OCI-LY7 (cell line): ENCODE measurements at regions of chr17 and their contacts with region 1.

Region 1: DNA sequence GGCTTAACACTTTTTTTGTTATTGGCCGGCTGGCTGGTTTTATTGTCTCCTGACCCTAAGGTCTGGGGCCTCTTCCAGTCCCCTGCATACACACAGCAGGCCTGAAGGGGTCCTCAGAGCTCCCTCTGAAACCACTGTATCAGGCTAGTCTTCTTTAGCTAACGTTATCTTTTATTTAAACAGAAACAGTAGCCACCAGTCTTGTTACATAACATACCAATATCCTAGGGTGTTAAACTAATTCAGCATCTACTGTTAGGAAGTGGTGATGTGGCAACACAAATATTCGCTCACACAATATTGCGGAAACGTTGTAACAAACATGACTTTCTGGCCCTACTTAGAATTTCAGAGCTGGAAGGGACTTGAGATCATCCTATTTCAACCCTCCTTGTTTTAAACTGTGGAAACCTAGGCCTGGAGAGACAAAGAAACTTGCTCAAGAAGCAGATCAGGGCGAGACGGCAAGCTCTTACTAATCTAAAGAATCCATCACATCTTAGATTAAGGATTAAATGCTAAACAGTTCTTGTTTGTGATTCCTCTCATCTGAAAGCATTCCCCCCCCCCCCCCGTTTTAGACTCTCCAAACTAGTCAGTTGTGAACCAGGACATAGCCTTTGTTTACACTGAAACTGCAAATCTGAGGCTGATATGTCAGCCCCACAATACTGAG is 1.7 kb upstream of the YPEL2 start:
- DNase-seq: peak; percentile 79
- H3K4me3 ChIP-seq: no peak overlapping the region
- H3K27ac ChIP-seq: peak overlapping the region; percentile 49
- H3K4me1 ChIP-seq: peaks cover 25% of the 10 kb centered on the region
- CTCF ChIP-seq: peak; percentile 96

Region 2: GRCh38 chr17:59361916-59362810 is 32.4 kb after region 1 on chr17:
- CTCF ChIA-PET with region 1: no interaction called
- POLR2A ChIA-PET with region 1: no interaction called
- intact Hi-C with region 1: loop called (anchors 1 kb)
- DNase-seq: peak; percentile 79
- H3K4me3 ChIP-seq: peak overlapping the region; percentile 46
- H3K27ac ChIP-seq: peak overlapping the region; percentile 76
- H3K4me1 ChIP-seq: peaks cover 62% of the 10 kb centered on the region
- CTCF ChIP-seq: no peak

Region 3: GRCh38 chr17:59440784-59441441 is 111.1 kb after region 1 on chr17:
- CTCF ChIA-PET with region 1: interaction called, 4 read pairs
- POLR2A ChIA-PET with region 1: interaction called, 4 read pairs
- intact Hi-C with region 1: loop called (anchors 1 kb)
- DNase-seq: peak; percentile 90
- H3K4me3 ChIP-seq: no peak overlapping the region
- H3K27ac ChIP-seq: no peak overlapping the region
- H3K4me1 ChIP-seq: peaks cover 37% of the 10 kb centered on the region
- CTCF ChIP-seq: peak; percentile 95